AG04449 (cell line): ENCODE measurements at regions of chr10 and their contacts with region 1.

Region 1: GRCh38 chr10:6202684-6203330 is at the start of gene PFKFB3:
- DNase-seq: no peak
- H3K4me3 ChIP-seq: peak within 1 kb of the TSS; percentile 83
- CTCF ChIP-seq: peak; percentile 87

Region 2: DNA sequence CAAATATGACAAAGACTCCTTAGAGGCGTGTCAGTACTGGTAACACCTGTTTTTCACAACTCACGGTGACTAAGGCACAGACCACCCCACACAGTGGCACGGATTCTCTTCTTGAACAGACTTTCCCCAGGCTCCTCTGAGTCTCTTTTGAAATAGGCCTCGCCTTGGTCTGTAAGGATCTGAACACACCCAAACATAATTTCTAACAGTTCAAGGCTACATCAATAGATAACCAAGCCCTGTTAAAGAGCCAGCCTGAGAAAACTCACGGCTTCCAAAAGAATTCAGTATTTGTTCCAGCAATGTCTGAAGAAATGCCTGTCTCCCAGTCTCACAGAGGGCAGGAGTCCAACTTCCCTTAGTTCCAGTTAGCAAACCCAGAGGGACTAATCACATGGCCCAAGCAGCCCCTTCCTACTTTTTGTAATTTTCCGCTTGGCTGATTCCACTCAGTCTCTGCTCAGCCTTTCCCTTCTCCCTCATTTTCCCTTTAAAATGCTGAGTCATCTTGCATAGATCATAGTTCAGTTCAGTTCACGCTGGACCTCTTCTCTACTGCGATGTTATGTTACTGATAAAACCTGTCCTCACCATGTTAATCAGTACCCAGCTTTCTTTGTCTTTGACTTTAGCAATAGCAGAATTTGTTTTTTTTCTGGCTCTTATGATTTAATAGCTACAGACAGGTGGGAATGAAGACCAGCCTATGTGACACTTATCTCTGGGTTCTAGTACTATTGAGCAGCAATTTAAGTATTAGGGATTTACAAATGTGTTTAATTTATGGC is 1131.2 kb before region 1 on chr10:
- CTCF ChIA-PET with region 1: no interaction called
- POLR2A ChIA-PET with region 1: no interaction called
- DNase-seq: peak; percentile 69
- H3K4me3 ChIP-seq: no peak overlapping the region
- CTCF ChIP-seq: no peak

Region 3: GRCh38 chr10:6136215-6137201 is 66.3 kb before region 1 on chr10:
- CTCF ChIA-PET with region 1: interaction called, 6 read pairs
- POLR2A ChIA-PET with region 1: interaction called, 21 read pairs
- DNase-seq: no peak
- H3K4me3 ChIP-seq: peak overlapping the region; percentile 23
- CTCF ChIP-seq: no peak

Region 4: DNA sequence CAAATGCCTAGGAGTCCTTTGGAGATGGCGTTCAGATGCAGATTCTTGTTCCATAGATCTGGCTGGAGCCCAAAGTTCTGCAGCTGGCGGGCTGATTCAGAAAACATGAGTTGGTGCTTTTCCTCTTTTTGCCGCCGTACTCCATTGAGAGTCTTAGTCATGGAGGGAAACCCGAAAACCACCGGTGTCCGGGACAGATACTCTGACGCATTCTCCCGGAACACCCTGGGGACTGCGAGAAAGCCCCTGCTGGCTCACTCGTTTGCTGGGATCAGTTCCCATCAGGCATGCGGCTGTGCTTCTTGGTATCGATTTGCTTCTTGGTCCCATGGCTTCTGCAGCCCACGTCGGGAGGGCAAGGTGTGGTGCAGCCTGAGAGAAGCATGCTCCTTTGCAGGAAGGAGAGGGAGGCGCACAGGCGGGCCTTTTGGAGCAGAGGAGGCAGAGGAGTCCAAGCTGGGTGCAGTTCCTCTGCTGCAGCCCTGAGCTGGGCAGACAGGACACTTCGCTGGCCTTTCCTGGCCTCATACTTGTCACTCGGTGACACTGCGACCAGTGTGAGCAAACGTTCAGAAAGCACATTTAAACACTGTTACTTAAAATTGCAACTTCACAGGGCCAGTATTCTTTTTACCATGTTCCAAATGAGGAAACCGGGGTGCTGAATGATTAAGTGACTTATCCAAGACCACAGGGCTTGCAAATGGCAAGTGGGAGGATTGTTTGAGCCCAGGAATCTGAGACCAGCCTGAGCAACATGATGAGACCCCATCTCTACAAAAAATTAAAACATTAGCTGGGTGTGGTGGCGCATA is 30.7 kb before region 1 on chr10:
- CTCF ChIA-PET with region 1: interaction called, 11 read pairs
- POLR2A ChIA-PET with region 1: interaction called, 7 read pairs
- DNase-seq: peak; percentile 63
- H3K4me3 ChIP-seq: peak overlapping the region; percentile 6; the same call in 1 of the 2 replicates
- CTCF ChIP-seq: no peak

Region 5: GRCh38 chr10:6187278-6187677 is 15.5 kb before region 1 on chr10:
- CTCF ChIA-PET with region 1: interaction called, 38 read pairs
- POLR2A ChIA-PET with region 1: interaction called, 4 read pairs
- DNase-seq: no peak
- H3K4me3 ChIP-seq: no peak overlapping the region
- CTCF ChIP-seq: no peak

Region 6: GRCh38 chr10:6228010-6228511 is 25.3 kb after region 1 on chr10:
- CTCF ChIA-PET with region 1: interaction called, 11 read pairs
- POLR2A ChIA-PET with region 1: interaction called, 15 read pairs
- DNase-seq: peak; percentile 23
- H3K4me3 ChIP-seq: no peak overlapping the region
- CTCF ChIP-seq: no peak